ENCODE measurements at regions of chr6 and their contacts with region 1.

Region 1: DNA sequence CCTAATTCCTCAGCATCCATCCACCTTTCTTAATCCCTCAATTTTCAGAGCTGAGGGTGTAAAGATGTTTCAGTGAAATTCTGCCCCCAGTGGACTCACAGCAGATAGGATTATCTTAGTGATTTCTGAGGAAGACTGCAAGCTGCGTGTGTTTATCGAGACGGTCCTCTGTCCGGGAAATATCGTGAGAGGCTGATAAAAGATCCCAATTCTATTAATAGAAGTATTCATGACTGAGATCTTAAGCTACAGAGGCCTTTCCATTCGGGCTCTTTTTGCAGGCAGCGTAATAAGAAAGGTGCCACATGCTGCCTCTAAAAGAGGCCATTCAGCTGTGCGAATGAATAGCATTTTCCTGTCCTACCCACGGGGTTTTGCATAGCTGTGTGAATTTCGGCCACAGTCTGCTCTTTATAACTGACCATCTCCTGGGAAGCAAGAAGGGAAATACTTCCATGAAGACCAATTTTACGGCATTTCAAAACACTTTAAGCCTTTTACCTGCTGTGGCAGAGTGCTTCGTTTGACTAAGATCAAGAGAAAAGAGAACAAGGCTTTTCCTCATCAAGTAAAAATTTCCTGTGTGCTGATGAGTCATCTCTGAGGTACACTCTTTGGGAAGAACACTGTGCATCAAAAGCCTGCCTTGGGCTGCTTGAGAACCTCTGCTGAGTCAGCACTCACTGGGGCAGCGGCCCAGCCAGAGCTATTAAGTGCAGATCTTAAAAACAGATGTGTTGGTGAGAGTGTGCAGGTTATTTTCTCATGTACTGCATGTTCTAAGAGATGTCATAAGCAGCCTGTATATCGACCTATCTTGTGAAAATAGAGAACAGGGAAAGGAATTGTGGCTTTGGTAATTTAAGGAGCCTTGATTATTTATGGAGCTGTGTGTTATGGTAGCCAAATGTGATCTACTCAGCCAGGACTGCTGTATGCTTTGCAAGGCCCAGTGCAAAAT is 208.7 kb downstream of the ARHGAP18 start:
- DNase-seq: no peak
- H3K4me3 ChIP-seq: no peak overlapping the region
- H3K27ac ChIP-seq: no peak overlapping the region
- H3K4me1 ChIP-seq: peaks cover 8 to 26% (median 14%) of the 10 kb centered on the region in 6 donors
- H3K27me3 ChIP-seq: no peaks in the 10 kb centered on the region
- CTCF ChIP-seq: no peak
- POLR2A ChIP-seq: no peak

Region 2: GRCh38 chr6:129575378-129576118 is 74.3 kb after region 1 on chr6:
- intact Hi-C with region 1: loop called (anchors 10 kb)
- DNase-seq: no peak
- H3K4me3 ChIP-seq: peak overlapping the region in 1 of 8 donors; percentile 33
- H3K27ac ChIP-seq: no peak overlapping the region
- H3K4me1 ChIP-seq: peaks cover 0 to 9% (median 0%) of the 10 kb centered on the region in 6 donors
- H3K27me3 ChIP-seq: no peaks in the 10 kb centered on the region
- CTCF ChIP-seq: peak in 8 of 11 experiments; percentile 42 to 69 (median 54)
- POLR2A ChIP-seq: no peak

Region 3: DNA sequence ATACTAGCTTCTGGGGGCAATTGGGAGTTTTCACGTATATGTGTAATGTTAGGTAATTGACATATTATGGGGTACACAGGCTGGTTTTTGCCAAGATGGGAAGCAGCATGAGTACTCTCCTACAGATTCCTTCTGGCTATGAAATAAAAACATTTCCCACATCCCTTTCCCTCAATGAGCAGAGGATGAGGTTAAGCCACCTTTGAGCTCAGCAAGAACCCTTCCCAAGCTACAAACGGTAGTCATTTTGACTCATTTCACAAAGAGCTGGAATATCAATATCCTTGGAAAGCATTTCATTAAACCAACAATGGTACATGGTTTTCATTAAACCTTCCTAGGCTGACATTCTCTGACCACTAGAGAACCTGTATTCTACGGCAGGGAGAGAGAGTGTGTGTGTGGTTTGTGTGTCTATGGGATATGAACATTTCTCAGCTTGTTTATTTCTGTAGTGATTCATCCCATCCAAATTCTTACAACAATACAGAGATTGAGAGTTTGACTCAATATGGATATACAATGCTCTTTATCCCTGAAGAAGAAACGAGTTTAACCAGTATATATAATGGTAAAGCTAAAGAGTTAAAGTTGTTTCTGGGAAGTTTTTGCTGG is 89.3 kb after region 1 on chr6:
- intact Hi-C with region 1: no loop called
- DNase-seq: no peak
- H3K4me3 ChIP-seq: no peak overlapping the region
- H3K27ac ChIP-seq: no peak overlapping the region
- H3K4me1 ChIP-seq: no peaks in the 10 kb centered on the region
- H3K27me3 ChIP-seq: no peaks in the 10 kb centered on the region
- CTCF ChIP-seq: no peak
- POLR2A ChIP-seq: no peak